Caco-2 (cell line): ENCODE measurements at regions of chr7 and their contacts with region 1.

Region 1: DNA sequence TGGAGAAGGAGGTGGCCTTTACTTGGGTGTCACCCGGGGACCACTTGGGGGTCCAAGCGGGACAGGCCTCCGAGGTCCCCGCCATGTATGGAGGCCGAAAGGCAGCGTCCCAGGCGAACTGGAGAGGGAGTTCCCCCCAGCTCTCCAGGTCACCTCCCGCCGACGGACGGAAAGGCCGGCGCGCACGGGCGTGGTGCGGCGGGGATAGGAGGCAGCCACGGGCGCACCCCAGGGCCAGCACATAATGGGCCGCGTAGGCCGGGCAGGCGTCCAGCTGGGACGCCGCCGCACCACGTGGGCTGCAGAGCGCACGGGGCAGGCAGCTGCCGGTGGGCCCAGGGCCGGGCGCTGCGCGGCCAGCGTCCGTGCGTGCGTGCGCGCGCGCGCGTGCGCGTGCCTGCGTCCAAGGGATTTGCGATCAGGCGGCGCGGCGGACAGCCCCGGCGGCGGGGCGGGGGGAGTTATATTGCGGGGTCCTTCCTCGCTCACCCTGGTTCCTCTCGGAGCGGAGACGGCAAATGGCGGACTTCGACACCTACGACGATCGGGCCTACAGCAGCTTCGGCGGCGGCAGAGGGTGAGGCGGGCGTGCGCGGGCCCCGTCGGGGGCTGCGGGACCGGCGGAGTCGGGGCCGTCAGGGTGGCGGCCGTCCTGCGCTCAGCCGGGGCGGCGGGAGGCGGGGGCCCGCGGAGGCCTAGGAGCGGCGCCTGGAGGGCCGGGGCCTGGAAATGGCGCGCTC is at the start of gene EIF4H:
- DNase-seq: peak; percentile 93 to 97
- H3K4me3 ChIP-seq: peak within 1 kb of the TSS; percentile 99
- H3K4me3 Mint-ChIP-seq: peak within 1 kb of the TSS; percentile 94
- H3K27ac Mint-ChIP-seq: peak within 1 kb of the TSS; percentile 90
- H3K4me1 ChIP-seq: peaks cover 13% of the 10 kb centered on the region; the same call in 1 of the 2 replicates
- H3K4me1 Mint-ChIP-seq: peaks cover 17% of the 10 kb centered on the region
- H3K27me3 ChIP-seq: no peaks in the 10 kb centered on the region
- H3K27me3 Mint-ChIP-seq: no peaks in the 10 kb centered on the region
- CTCF ChIP-seq: no peak
- total RNA-seq, gene EIF4H: 370 TPM in 2 replicates

Region 2: GRCh38 chr7:74083117-74083876 is 90.7 kb before region 1 on chr7 and contains the start of gene LIMK1:
- CTCF ChIA-PET with region 1: no interaction called
- POLR2A ChIA-PET with region 1: interaction called, 19 read pairs
- intact Hi-C with region 1: loop called (anchors 5 kb)
- DNase-seq: peak; percentile 80 to 87
- H3K4me3 ChIP-seq: peak within 1 kb of the TSS; percentile 82
- H3K4me3 Mint-ChIP-seq: peak within 1 kb of the TSS; percentile 84
- H3K27ac Mint-ChIP-seq: peak within 1 kb of the TSS; percentile 85
- H3K4me1 ChIP-seq: peaks cover 5% of the 10 kb centered on the region
- H3K4me1 Mint-ChIP-seq: no peaks in the 10 kb centered on the region
- H3K27me3 ChIP-seq: no peaks in the 10 kb centered on the region
- H3K27me3 Mint-ChIP-seq: no peaks in the 10 kb centered on the region
- CTCF ChIP-seq: no peak
- total RNA-seq, gene LIMK1: 30.6 and 31.4 TPM in 2 replicates

Region 3: DNA sequence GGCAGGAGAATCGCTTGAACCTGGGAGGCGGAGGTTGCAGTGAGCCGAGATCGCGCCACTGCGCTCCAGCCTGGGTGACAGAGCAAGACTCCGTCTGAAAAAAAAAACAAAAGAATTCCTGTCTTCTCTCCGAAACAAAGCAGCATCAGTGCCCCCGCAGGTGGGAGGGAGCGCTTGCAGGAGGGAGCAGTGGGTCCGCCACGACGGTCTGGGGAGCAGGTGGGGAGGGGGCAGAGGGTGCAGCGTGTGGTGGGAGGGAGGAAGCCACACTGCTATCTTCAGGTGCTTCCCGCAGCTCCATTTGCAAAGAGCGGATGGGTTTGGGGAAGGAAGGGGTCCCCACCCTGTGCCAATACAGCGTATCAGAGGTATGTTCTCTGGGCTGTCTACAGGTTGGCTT is 58.7 kb before region 1 on chr7:
- CTCF ChIA-PET with region 1: no interaction called
- POLR2A ChIA-PET with region 1: no interaction called
- intact Hi-C with region 1: no loop called
- DNase-seq: peak in 1 of 2 experiments; percentile 29
- H3K4me3 ChIP-seq: no peak overlapping the region
- H3K4me3 Mint-ChIP-seq: no peak overlapping the region
- H3K27ac Mint-ChIP-seq: no peak overlapping the region
- H3K4me1 ChIP-seq: no peaks in the 10 kb centered on the region
- H3K4me1 Mint-ChIP-seq: no peaks in the 10 kb centered on the region
- H3K27me3 ChIP-seq: no peaks in the 10 kb centered on the region
- H3K27me3 Mint-ChIP-seq: no peaks in the 10 kb centered on the region
- CTCF ChIP-seq: peak in 1 of 2 experiments; percentile 9

Region 4: DNA sequence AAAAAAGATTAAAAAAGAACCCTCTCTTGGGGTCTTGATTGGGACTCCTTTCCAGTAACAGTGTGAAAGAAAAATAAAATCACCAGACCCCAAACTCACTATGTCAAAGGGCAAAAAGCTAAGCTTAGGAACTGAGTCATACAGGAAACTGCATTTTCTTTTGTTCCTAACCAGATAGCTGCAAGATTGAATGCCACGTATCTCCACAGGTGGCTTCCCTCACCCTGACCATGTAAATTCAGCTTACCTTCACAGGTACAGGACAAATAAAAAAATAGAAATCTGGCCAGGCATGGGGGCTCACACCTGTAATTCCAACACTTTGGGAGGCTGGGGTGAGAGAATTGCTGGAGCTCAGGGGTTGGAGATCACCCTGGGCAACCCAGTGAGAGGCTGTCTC is 32.3 kb before region 1 on chr7:
- CTCF ChIA-PET with region 1: no interaction called
- POLR2A ChIA-PET with region 1: interaction called, 11 read pairs
- intact Hi-C with region 1: no loop called
- DNase-seq: no peak
- H3K4me3 ChIP-seq: no peak overlapping the region
- H3K4me3 Mint-ChIP-seq: no peak overlapping the region
- H3K27ac Mint-ChIP-seq: no peak overlapping the region
- H3K4me1 ChIP-seq: no peaks in the 10 kb centered on the region
- H3K4me1 Mint-ChIP-seq: no peaks in the 10 kb centered on the region
- H3K27me3 ChIP-seq: no peaks in the 10 kb centered on the region
- H3K27me3 Mint-ChIP-seq: no peaks in the 10 kb centered on the region
- CTCF ChIP-seq: no peak

Region 5: GRCh38 chr7:74217455-74218342 is 43.7 kb after region 1 on chr7:
- CTCF ChIA-PET with region 1: no interaction called
- POLR2A ChIA-PET with region 1: no interaction called
- intact Hi-C with region 1: no loop called
- DNase-seq: no peak
- H3K4me3 ChIP-seq: no peak overlapping the region
- H3K4me3 Mint-ChIP-seq: no peak overlapping the region
- H3K27ac Mint-ChIP-seq: no peak overlapping the region
- H3K4me1 ChIP-seq: peaks cover 13% of the 10 kb centered on the region
- H3K4me1 Mint-ChIP-seq: peaks cover 14% of the 10 kb centered on the region
- H3K27me3 ChIP-seq: no peaks in the 10 kb centered on the region
- H3K27me3 Mint-ChIP-seq: no peaks in the 10 kb centered on the region
- CTCF ChIP-seq: no peak